K562 (cell line): ENCODE measurements at regions of chr3 and their contacts with region 1.

Region 1: DNA sequence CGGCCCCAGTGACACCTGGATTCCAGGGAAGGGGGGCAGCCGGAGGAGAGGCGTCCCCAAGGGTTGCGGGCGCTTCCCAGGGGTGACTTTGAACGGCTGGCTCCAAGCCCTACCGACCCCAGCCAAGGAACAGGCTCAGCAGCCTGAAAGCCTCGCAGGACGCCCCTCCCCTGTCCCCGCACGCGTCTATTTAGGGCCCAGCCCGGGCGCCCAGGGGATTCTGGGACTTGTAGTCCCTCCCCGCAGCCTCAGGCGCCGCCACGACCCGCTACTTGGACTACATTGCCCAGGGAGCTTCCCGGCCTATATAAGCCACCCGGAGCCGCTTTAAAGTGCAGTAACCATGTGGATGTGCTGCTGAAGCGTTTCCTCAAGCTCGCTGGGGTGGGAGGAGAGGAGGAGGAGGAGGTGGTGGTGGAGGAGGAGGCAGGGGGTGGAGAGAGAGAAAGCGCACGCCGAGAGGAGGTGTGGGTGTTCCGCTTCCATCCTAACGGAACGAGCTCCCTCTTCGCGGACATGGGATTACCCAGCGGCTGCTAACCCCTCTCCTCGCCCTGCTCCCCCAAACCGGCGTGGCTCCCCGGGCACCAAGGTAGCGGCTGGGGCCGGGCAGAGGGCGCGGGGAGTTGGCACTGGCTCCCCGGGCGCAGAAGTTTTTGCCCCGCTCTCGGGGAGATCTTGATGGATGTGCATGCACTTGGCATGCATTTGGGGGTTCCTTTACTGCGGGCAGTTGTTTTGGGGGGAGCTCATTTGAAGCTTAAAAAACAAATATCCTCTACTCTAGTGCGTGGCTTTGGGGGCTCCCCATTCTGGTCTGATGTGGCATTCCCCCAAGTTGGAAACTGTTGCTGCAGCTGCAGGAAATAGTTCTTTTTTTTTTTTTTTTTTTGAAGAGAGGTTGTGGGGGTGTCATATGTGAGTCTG is at the start of gene ITPR1:
- DNase-seq: peak; percentile 97 to 100 (median 98)
- ATAC-seq: peak; percentile 93
- H3K4me3 ChIP-seq: peak within 1 kb of the TSS; percentile 61
- H3K27ac ChIP-seq: peak within 1 kb of the TSS; percentile 52
- H3K4me1 ChIP-seq: peaks cover 17 to 25% of the 10 kb centered on the region in 2 experiments
- H3K27me3 ChIP-seq: no peaks in the 10 kb centered on the region
- CTCF ChIP-seq: peak; percentile 7 to 39 (median 17); a peak in 3 of 6 replicates
- EP300 ChIP-seq: 0 out of 2 replicates have a peak, but pooled peaks have one; percentile 3
- POLR2A ChIP-seq: peak; percentile 99
- RAD21 ChIP-seq: peak; percentile 50 to 52; a peak in 3 of 4 replicates
- polyA plus RNA-seq, gene ITPR1: 26.2 to 33.9 TPM

Region 2: GRCh38 chr3:4078903-4079302 is 414.4 kb before region 1 on chr3:
- CTCF ChIA-PET with region 1: no interaction called
- POLR2A ChIA-PET with region 1: no interaction called
- in situ Hi-C with region 1: no loop called
- intact Hi-C with region 1: no loop called
- DNase-seq: no peak
- ATAC-seq: no peak
- H3K4me3 ChIP-seq: no peak overlapping the region
- H3K27ac ChIP-seq: no peak overlapping the region
- H3K4me1 ChIP-seq: no peaks in the 10 kb centered on the region
- H3K27me3 ChIP-seq: no peaks in the 10 kb centered on the region
- CTCF ChIP-seq: no peak
- EP300 ChIP-seq: no peak
- POLR2A ChIP-seq: no peak
- RAD21 ChIP-seq: no peak

Region 3: DNA sequence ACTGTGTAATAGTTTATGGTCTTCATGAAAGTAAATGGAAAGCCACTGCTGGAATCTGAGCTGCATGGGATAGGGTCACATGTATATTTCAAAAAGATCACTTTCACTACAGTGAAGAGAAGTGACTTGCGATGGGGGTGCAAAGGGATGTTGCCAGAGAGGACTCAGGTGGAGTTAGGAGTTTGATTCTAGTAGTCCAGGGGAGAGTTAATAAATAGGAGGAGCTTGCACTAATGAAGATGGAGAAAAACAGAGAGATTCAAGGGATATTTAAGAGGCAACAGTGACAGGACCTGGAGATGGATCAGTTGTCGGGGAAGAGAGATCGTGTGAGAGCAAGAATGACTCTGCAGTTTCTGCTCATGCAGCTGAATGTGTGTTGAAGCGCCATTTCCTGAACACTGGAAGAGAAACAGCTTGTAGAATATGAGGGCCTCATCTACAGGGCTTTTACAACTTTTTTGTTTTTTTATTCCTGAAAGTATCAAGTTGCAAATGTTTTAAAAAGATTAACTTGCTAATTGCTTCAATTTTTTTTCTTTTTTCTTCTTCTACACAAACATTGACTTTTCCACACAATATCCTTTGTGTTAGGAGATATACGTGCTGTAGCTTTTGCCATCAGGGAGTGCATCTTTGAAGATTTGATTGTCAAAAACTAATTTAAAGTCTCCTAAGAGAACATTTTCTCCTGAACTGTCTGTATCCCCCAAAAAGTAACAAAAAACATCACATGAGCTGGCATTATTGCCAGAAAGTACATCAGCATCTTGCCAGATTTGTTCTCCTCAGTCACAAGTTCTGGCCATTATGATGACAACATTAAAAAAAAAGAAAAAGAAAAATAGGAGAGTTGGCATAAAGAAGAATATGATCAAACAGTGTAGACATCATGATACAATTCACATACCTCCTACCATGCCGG is 152.6 kb before region 1 on chr3:
- CTCF ChIA-PET with region 1: no interaction called
- POLR2A ChIA-PET with region 1: interaction called, 12 read pairs
- in situ Hi-C with region 1: no loop called
- intact Hi-C with region 1: no loop called
- DNase-seq: peak in 3 of 4 experiments; percentile 29 to 77 (median 68)
- ATAC-seq: peak; percentile 88
- H3K4me3 ChIP-seq: no peak overlapping the region
- H3K27ac ChIP-seq: 0 out of 3 replicates have a peak overlapping the region, but pooled peaks have one; percentile 11
- H3K4me1 ChIP-seq: peaks cover 0 to 12% of the 10 kb centered on the region in 2 experiments; a peak in 3 of 5 replicates
- H3K27me3 ChIP-seq: no peaks in the 10 kb centered on the region
- CTCF ChIP-seq: no peak
- EP300 ChIP-seq: peak; percentile 46; the same call in 1 of the 2 replicates
- POLR2A ChIP-seq: no peak
- RAD21 ChIP-seq: peak in 1 of 2 experiments; percentile 13; a peak in 1 of 4 replicates

Region 4: DNA sequence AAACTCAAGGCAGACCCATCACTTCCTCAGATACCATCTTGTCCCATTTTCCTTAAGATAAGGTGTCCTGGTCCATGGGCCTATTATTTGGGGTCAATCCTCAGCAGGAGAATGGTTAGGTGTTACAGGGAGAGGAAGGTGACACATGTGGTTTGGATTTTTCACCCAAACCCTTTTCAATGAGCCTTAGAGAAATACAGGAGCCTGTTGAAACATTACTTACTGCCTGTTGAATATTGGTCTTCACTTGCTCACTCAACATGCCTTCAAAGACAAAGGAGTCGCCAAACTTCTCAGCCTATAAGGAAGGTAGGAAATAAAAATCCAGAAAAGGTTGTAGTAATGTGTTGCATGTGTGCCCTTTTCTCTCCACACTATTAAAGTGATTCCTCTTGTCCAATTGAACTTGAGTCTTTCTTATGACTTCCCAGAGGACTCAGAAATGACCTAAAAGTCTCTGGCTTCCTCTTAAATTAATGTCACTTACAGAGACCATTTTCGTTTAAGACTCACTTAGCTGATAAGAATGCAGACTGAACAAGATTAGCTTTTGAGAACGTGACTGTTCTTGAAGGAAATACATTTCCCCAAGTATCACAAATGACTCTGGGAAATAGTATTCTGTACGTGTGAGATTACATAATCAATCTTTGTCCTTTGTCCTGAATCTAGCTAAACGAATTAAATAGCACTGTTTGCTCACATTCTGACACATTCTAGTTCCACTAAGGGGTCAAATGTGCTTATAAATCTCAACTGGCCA is 44.1 kb before region 1 on chr3:
- CTCF ChIA-PET with region 1: no interaction called
- POLR2A ChIA-PET with region 1: interaction called, 15 read pairs
- in situ Hi-C with region 1: no loop called
- intact Hi-C with region 1: no loop called
- DNase-seq: no peak
- ATAC-seq: no peak
- H3K4me3 ChIP-seq: no peak overlapping the region
- H3K27ac ChIP-seq: no peak overlapping the region
- H3K4me1 ChIP-seq: peaks cover 0 to 18% of the 10 kb centered on the region in 2 experiments; a peak in 2 of 5 replicates
- H3K27me3 ChIP-seq: no peaks in the 10 kb centered on the region
- CTCF ChIP-seq: no peak
- EP300 ChIP-seq: no peak
- POLR2A ChIP-seq: no peak
- RAD21 ChIP-seq: no peak

Region 5: GRCh38 chr3:4504340-4505261 is 11.3 kb after region 1 on chr3:
- CTCF ChIA-PET with region 1: no interaction called
- POLR2A ChIA-PET with region 1: interaction called, 220 read pairs
- in situ Hi-C with region 1: no loop called
- intact Hi-C with region 1: no loop called
- DNase-seq: no peak
- ATAC-seq: no peak
- H3K4me3 ChIP-seq: no peak overlapping the region
- H3K27ac ChIP-seq: no peak overlapping the region
- H3K4me1 ChIP-seq: peaks cover 15 to 55% of the 10 kb centered on the region in 2 experiments
- H3K27me3 ChIP-seq: no peaks in the 10 kb centered on the region
- CTCF ChIP-seq: no peak
- EP300 ChIP-seq: no peak
- POLR2A ChIP-seq: no peak
- RAD21 ChIP-seq: 0 out of 4 replicates have a peak, but pooled peaks of 1 of the 2 experiments have one; percentile 11

Region 6: GRCh38 chr3:4533489-4534443 is 40.5 kb after region 1 on chr3:
- CTCF ChIA-PET with region 1: no interaction called
- POLR2A ChIA-PET with region 1: interaction called, 17 read pairs
- in situ Hi-C with region 1: no loop called
- intact Hi-C with region 1: loop called (anchors 1 kb)
- DNase-seq: peak; percentile 45 to 90 (median 67)
- ATAC-seq: peak; percentile 84
- H3K4me3 ChIP-seq: no peak overlapping the region
- H3K27ac ChIP-seq: peak overlapping the region; percentile 75
- H3K4me1 ChIP-seq: peaks cover 28 to 43% of the 10 kb centered on the region in 2 experiments
- H3K27me3 ChIP-seq: no peaks in the 10 kb centered on the region
- CTCF ChIP-seq: peak; percentile 1 to 30 (median 21); a peak in 1 of 6 replicates
- EP300 ChIP-seq: peak; percentile 99
- POLR2A ChIP-seq: no peak
- RAD21 ChIP-seq: peak in 1 of 2 experiments; percentile 43; a peak in 2 of 4 replicates

Region 7: GRCh38 chr3:4633078-4634004 is 140.1 kb after region 1 on chr3:
- CTCF ChIA-PET with region 1: no interaction called
- POLR2A ChIA-PET with region 1: interaction called, 11 read pairs
- in situ Hi-C with region 1: no loop called
- intact Hi-C with region 1: loop called (anchors 1 kb)
- DNase-seq: peak; percentile 32 to 73 (median 54)
- ATAC-seq: peak; percentile 86
- H3K4me3 ChIP-seq: no peak overlapping the region
- H3K27ac ChIP-seq: no peak overlapping the region
- H3K4me1 ChIP-seq: peaks cover 2 to 4% of the 10 kb centered on the region in 2 experiments; a peak in 3 of 5 replicates
- H3K27me3 ChIP-seq: no peaks in the 10 kb centered on the region
- CTCF ChIP-seq: peak; percentile 77 to 97 (median 91)
- EP300 ChIP-seq: no peak
- POLR2A ChIP-seq: no peak
- RAD21 ChIP-seq: peak; percentile 96 to 97

Region 8: GRCh38 chr3:4687167-4687566 is 193.9 kb after region 1 on chr3:
- CTCF ChIA-PET with region 1: no interaction called
- POLR2A ChIA-PET with region 1: no interaction called
- in situ Hi-C with region 1: no loop called
- intact Hi-C with region 1: no loop called
- DNase-seq: peak; percentile 24 to 50 (median 36)
- ATAC-seq: peak; percentile 89
- H3K4me3 ChIP-seq: no peak overlapping the region
- H3K27ac ChIP-seq: no peak overlapping the region
- H3K4me1 ChIP-seq: 0 out of 5 replicates have a peak, but pooled peaks cover 0 to 4% of the 10 kb centered on the region in 2 experiments
- H3K27me3 ChIP-seq: no peaks in the 10 kb centered on the region; a peak in 1 of 5 replicates
- CTCF ChIP-seq: peak; percentile 31 to 44 (median 38); a peak in 5 of 6 replicates
- EP300 ChIP-seq: no peak
- POLR2A ChIP-seq: no peak
- RAD21 ChIP-seq: peak in 1 of 2 experiments; percentile 55; a peak in 2 of 4 replicates

Region 9: DNA sequence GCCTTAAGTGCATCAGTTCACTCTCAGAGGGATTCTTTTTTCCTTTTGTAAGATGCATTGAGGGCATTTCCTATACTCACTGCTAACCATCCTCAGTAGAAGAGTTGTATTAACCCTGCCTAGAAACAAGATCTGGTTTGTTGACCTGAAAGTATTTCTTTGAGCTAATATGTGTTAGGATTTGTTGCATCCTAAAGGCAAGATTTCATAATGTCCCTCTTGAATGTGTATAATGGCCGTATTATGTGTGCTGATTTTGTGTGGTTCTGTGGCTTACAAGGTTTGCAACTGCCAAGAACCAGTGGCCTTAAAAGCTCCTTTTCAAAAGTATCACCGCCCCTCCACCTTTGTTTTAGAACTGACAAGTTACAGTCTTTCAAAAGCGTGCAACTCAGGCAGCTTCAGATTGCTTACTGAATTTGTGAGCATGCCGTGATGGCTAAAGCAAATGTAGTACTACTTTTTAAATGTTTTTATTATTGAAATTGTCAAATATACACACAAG is 304.0 kb after region 1 on chr3:
- CTCF ChIA-PET with region 1: no interaction called
- POLR2A ChIA-PET with region 1: no interaction called
- in situ Hi-C with region 1: no loop called
- intact Hi-C with region 1: no loop called
- DNase-seq: no peak
- ATAC-seq: no peak
- H3K4me3 ChIP-seq: no peak overlapping the region
- H3K27ac ChIP-seq: no peak overlapping the region
- H3K4me1 ChIP-seq: no peaks in the 10 kb centered on the region
- H3K27me3 ChIP-seq: no peaks in the 10 kb centered on the region
- CTCF ChIP-seq: no peak
- EP300 ChIP-seq: no peak
- POLR2A ChIP-seq: no peak
- RAD21 ChIP-seq: no peak